ENCODE measurements at regions of chr1 and their contacts with region 1.

Region 1: DNA sequence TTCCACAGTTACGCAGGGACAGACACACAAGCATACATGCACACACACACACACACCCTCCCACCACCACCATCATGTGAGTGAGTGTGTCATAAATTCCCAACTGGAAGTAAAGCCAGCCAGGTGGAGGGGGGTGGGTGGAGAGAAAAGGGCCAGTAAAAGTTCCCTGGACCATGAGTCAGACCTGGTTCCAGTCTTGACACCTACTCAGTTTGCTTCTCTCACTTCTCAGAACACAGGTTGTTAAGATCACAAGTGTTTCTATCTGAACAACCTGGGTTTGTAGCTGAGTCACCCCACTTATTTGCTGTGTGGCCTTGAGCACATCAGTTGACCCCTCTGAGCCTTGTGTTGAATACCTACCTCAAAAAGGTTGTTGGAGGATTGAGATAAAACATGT is 9.6 kb downstream of the EPHA10 start:
- DNase-seq: peak; percentile 73
- H3K4me3 Mint-ChIP-seq: no peak overlapping the region
- H3K27ac Mint-ChIP-seq: no peak overlapping the region
- H3K4me1 Mint-ChIP-seq: peaks cover 28% of the 10 kb centered on the region
- H3K27me3 Mint-ChIP-seq: peaks cover 32% of the 10 kb centered on the region

Region 2: GRCh38 chr1:37549341-37549740 is 205.9 kb before region 1 on chr1:
- CTCF ChIA-PET with region 1: no interaction called
- POLR2A ChIA-PET with region 1: no interaction called
- intact Hi-C with region 1: no loop called
- DNase-seq: no peak
- H3K4me3 Mint-ChIP-seq: no peak overlapping the region
- H3K27ac Mint-ChIP-seq: no peak overlapping the region
- H3K4me1 Mint-ChIP-seq: peaks cover 36% of the 10 kb centered on the region
- H3K27me3 Mint-ChIP-seq: no peaks in the 10 kb centered on the region

Region 3: GRCh38 chr1:37739222-37739621 is 16.1 kb before region 1 on chr1:
- CTCF ChIA-PET with region 1: no interaction called
- POLR2A ChIA-PET with region 1: no interaction called
- intact Hi-C with region 1: loop called (anchors 1 kb)
- DNase-seq: peak; percentile 33
- H3K4me3 Mint-ChIP-seq: no peak overlapping the region
- H3K27ac Mint-ChIP-seq: no peak overlapping the region
- H3K4me1 Mint-ChIP-seq: peaks cover 6% of the 10 kb centered on the region
- H3K27me3 Mint-ChIP-seq: peaks cover 39% of the 10 kb centered on the region

Region 4: DNA sequence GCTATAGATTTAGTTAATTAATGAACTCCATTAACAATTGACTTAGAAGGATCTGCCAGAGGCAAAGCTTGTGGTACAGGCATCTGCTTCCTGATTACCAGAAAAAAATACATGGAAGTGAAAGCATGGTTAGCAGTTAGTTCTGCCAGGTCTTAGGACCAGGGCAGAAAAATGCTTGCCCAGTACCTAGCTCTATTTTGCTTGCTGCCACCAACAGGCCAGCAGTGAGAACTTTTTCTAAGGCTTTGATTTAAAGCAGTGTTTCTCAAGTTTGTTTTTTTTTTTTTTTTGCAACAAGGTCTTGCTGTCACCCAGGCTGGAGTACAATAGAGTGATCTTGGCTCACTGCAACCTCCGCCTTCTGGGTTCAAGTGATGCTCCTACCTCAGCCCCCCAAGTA is 120.5 kb after region 1 on chr1:
- CTCF ChIA-PET with region 1: no interaction called
- POLR2A ChIA-PET with region 1: no interaction called
- intact Hi-C with region 1: no loop called
- DNase-seq: no peak
- H3K4me3 Mint-ChIP-seq: no peak overlapping the region
- H3K27ac Mint-ChIP-seq: no peak overlapping the region
- H3K4me1 Mint-ChIP-seq: peaks cover 4% of the 10 kb centered on the region
- H3K27me3 Mint-ChIP-seq: no peaks in the 10 kb centered on the region

Measured in activated CD4-positive, alpha-beta memory T cell treated with anti-CD3 and anti-CD28 coated beads for 36 hours (primary cell).